Mammary epithelial cell (primary cell): ENCODE measurements at regions of chr2 and their contacts with region 1.

Region 1: GRCh38 chr2:19863303-19864041 is 38.3 kb downstream of the TTC32 start:
- DNase-seq: peak; percentile 26
- H3K4me3 ChIP-seq: no peak overlapping the region
- H3K27ac ChIP-seq: no peak overlapping the region
- H3K4me1 ChIP-seq: peaks cover 26% of the 10 kb centered on the region
- H3K27me3 ChIP-seq: no peaks in the 10 kb centered on the region
- CTCF ChIP-seq: peak; percentile 63 to 93

Region 2: GRCh38 chr2:18435421-18436037 is 1427.9 kb before region 1 on chr2:
- CTCF ChIA-PET with region 1: no interaction called
- dilution Hi-C with region 1: no loop called
- in situ Hi-C with region 1: loop called in 1 of 2 experiments (anchors 25 kb)
- intact Hi-C with region 1: loop called (anchors 1 kb)
- DNase-seq: peak; percentile 31
- H3K4me3 ChIP-seq: no peak overlapping the region
- H3K27ac ChIP-seq: no peak overlapping the region
- H3K4me1 ChIP-seq: no peaks in the 10 kb centered on the region
- H3K27me3 ChIP-seq: no peaks in the 10 kb centered on the region
- CTCF ChIP-seq: peak; percentile 61 to 68

Region 3: DNA sequence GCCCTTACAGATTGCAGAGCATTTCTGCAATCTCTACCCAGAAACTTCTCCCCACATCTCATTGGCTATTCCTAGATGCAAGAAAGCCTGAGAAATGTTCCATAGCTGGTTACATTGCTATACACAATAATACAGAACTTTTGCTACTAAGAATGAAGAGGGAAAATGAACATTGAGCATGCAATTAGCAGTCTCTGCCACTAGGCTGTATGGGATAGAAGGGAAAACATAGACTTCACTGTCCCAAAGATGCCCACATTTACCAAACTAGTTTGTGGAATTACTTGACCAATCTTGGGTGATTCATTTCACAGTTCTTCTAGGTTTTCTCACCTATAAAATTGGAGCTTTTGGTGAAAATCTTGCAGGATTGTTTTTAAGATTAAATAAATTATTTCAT is 1008.4 kb before region 1 on chr2:
- CTCF ChIA-PET with region 1: no interaction called
- dilution Hi-C with region 1: no loop called
- in situ Hi-C with region 1: loop called in 1 of 2 experiments (anchors 25 kb)
- intact Hi-C with region 1: loop called (anchors 10 kb)
- DNase-seq: peak; percentile 13
- H3K4me3 ChIP-seq: no peak overlapping the region
- H3K27ac ChIP-seq: no peak overlapping the region
- H3K4me1 ChIP-seq: no peaks in the 10 kb centered on the region
- H3K27me3 ChIP-seq: no peaks in the 10 kb centered on the region
- CTCF ChIP-seq: peak; percentile 67 to 68

Region 4: DNA sequence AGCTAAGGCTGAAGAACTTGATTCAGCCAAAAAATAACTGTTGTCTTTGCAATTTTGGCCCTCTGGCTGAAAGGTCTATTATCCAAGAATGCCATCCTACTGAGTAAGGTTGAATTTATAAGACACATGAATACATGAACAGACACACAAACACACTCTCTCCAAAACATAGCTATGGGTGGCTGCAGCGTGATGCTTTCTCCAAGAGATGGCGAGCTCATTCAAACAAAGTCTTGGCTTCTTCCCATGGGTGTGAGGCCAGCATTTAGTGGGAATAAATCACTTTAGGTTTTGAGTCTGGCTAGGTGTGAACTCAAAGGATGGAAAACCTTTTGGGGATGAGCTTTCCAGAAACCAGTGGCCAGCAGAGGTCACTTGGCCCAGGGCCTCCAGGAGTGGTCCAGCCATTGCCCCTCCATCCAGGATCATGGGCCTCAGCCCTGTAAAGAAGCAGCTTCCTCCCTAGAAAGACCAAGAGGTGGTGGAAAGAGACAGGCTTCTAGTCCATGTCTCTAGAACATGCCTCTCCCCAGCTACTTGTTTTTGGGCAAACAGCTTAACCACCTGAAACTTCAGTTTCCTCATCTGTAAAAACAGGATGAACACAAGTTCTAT is 494.0 kb before region 1 on chr2:
- CTCF ChIA-PET with region 1: no interaction called
- dilution Hi-C with region 1: loop called (anchors 5 kb)
- in situ Hi-C with region 1: loop called (anchors 5 kb)
- intact Hi-C with region 1: loop called (anchors 1 kb)
- DNase-seq: peak; percentile 51
- H3K4me3 ChIP-seq: no peak overlapping the region
- H3K27ac ChIP-seq: no peak overlapping the region
- H3K4me1 ChIP-seq: no peaks in the 10 kb centered on the region
- H3K27me3 ChIP-seq: no peaks in the 10 kb centered on the region
- CTCF ChIP-seq: peak; percentile 82 to 84

Region 5: DNA sequence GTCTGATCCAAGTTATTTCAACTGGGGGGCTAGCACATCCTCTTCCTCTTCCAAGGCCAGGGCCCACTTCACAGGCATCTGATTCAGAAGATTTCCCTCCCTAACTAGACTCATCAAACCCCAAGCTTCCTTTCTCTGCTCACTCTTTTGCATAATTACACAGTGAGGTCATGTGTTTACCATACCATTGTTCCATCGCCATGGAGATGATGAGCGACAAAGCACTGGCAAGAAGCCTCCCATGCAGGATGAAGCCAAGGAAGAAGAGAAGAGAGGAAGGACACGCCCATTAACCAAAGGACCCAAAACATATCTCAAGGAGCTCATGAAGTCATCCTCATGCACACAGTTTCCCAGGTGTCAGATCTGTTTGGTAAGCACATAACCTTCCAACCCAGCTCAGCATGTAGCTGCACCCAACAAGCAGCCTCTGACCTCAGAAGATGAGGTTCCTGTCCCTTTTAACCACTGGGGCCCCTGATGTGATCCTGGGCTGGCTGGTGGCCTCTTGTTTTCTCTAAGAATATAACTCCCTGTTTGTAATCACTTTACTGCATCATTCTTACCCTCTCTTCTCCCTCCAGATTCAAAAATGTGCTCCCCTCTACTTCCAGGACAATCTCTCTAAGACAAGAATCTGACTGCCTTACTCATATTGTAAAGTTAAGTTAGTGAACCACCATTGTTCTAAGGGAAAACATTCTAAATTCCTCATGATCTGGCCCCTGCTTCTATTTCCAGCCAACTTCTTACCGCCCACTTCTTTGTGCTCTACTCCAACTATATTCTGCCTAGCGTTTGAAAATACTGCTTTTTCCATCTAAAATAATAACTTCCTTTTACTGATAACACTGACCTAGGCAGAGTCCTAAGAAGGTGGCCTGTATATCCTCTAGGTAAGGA is 151.8 kb before region 1 on chr2:
- CTCF ChIA-PET with region 1: no interaction called
- dilution Hi-C with region 1: no loop called
- in situ Hi-C with region 1: no loop called
- intact Hi-C with region 1: loop called (anchors 1 kb)
- DNase-seq: peak; percentile 97
- H3K4me3 ChIP-seq: no peak overlapping the region
- H3K27ac ChIP-seq: peak overlapping the region; percentile 72
- H3K4me1 ChIP-seq: peaks cover 10% of the 10 kb centered on the region
- H3K27me3 ChIP-seq: no peaks in the 10 kb centered on the region
- CTCF ChIP-seq: no peak

Region 6: DNA sequence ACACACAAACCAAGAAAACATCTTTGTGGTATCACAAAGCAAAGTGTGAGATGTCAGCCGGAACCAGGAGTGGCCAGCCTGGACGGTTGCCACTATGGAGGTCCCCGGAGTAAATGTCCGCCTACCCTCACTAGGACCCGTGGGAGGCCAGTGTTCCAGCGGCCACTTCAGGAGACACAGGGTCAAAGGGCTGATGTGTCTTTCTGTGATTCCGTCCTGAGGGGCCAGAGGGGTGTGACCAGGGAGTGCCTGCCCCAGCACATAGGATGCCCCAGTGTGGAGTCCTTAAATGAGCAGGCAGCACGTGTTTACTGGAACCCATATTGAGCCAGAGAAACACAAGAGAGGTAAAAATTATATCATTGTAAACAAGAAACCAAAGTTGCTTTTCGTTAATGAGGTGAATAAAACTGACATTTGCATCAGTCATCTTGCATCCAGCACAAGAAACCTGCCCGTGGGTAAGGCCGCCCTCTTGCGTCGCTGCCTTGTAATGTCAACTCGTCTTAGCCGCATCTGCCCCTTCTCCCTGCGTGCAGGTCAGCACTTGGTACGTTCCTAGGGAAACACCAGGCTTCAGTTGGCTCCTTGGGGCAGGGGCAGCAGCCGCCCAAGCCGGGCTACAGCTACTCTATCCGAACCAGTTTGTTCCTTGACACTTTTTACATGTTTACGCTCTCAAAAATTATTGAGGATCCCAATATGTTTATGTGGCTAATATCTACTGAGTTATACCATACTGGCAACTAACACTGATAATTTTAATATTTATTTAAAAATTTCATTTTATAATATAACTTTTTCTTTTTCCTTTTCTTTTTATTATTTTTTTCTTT is 234.6 kb after region 1 on chr2:
- CTCF ChIA-PET with region 1: no interaction called
- dilution Hi-C with region 1: no loop called
- in situ Hi-C with region 1: no loop called
- intact Hi-C with region 1: loop called (anchors 5 kb)
- DNase-seq: peak; percentile 76
- H3K4me3 ChIP-seq: no peak overlapping the region
- H3K27ac ChIP-seq: no peak overlapping the region
- H3K4me1 ChIP-seq: peaks cover 23% of the 10 kb centered on the region
- H3K27me3 ChIP-seq: no peaks in the 10 kb centered on the region
- CTCF ChIP-seq: peak; percentile 93 to 96

Region 7: DNA sequence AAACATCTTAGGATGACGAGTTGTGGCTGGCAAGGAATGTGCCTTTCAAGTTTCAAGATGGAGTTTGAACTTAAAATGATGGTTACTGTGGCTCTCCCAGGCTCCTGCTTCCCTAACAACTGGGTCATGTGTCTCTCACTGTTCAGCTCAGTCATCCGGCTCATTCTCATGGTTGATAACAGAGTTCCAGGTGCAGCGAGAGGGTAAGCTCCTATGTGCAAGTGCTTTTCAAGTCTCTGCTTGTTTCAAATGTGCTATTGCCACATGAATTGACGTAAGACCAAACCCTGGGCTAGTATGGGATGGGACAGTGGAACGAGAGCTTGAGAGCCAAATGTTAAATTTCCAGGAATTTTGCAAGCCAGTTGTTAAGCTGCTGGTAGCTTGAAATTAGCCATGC is 506.7 kb after region 1 on chr2:
- CTCF ChIA-PET with region 1: no interaction called
- dilution Hi-C with region 1: no loop called
- in situ Hi-C with region 1: no loop called
- intact Hi-C with region 1: no loop called
- DNase-seq: peak; percentile 100
- H3K4me3 ChIP-seq: no peak overlapping the region
- H3K27ac ChIP-seq: peak overlapping the region; percentile 63
- H3K4me1 ChIP-seq: peaks cover 32% of the 10 kb centered on the region
- H3K27me3 ChIP-seq: no peaks in the 10 kb centered on the region
- CTCF ChIP-seq: no peak